PC-9 (cell line): ENCODE measurements at regions of chr2 and their contacts with region 1.

Region 1: DNA sequence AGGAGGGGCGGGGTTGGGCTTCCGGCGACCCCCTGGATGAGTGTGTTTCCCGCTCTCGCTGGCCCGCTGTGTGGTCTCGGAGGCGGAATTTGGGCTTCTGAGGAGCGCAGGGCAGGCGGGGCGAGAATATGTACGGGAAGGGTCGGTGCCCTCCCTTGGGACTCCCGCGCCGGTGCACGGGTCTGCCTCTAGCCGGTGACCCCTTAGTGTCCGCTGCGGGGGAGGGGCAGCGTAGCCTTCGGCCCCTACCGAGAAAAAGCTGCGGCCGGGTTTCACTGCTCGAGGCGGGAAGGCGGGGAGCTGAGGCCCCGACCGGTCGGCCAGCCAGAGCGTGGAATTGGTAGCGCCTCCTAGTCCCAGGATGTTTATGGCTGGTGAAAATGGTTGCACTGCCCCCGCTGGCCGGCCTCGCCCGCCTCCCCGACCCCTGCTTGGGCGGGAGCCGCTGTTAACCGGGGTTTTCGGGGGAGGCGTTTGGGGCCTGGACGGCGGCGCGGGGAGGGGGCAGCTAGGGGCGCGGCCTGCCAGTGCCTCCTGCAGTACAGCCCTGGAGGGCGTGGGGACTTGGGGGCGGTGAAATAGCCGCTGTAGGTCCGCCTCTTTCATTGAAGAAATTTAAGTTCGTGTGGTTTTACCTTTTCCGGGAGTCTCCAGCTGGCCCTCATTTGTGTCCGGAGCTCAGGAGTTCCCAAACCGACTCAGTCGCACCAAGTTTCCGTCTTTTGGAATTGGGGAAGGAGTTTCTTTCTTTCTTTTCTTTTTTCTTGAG is at the start of gene UGP2:
- DNase-seq: peak; percentile 92 to 96
- H3K4me3 ChIP-seq: peak within 1 kb of the TSS; percentile 90
- H3K27ac ChIP-seq: peak within 1 kb of the TSS; percentile 85
- H3K4me1 ChIP-seq: peaks cover 35% of the 10 kb centered on the region
- H3K27me3 ChIP-seq: no peaks in the 10 kb centered on the region
- CTCF ChIP-seq: 0 out of 2 replicates have a peak, but pooled peaks have one; percentile 37
- total RNA-seq, gene UGP2: 83.5 and 89.5 TPM in 2 replicates

Region 2: GRCh38 chr2:63614983-63615945 is 226.2 kb before region 1 on chr2:
- CTCF ChIA-PET with region 1: no interaction called
- POLR2A ChIA-PET with region 1: interaction called, 6 read pairs
- intact Hi-C with region 1: loop called (anchors 2 kb)
- DNase-seq: peak; percentile 57 to 91
- H3K4me3 ChIP-seq: peak overlapping the region; percentile 51
- H3K27ac ChIP-seq: peak overlapping the region; percentile 94
- H3K4me1 ChIP-seq: peaks cover 38% of the 10 kb centered on the region
- H3K27me3 ChIP-seq: no peaks in the 10 kb centered on the region
- CTCF ChIP-seq: no peak

Region 3: DNA sequence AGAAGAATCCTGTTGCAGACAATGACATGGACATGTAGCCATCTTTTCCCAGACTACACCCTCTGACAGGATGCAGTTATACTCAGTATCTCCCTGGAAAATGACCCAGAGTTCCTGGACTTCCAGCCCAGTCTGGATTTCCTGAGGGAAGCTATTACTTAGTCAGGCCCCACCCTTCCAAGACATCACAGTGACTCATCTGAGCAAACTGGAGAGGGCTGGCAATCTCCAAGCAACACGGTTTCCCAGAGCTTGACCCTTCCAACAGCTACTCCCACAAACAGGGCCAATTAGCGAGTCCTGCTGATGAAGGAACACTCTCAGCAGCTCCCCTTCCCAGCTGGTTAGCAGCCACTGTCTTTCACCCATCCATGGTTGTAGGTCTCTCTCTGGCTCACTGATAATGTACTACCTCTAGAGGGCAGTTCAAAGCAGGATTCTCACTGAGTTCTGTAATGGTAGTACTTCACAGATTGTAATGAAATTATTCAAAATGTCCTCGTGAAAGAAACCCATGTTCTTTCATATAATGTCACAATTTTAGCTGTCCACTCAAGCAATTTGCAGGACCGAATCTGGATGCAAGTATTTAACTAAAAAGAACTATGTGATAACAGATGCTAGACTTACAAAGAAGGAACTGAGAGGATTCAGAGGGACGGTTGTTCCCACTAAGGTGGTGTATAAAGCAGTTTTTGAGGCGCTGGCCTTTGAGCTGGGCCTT is 142.5 kb before region 1 on chr2:
- CTCF ChIA-PET with region 1: interaction called, 4 read pairs
- POLR2A ChIA-PET with region 1: no interaction called
- intact Hi-C with region 1: loop called (anchors 2 kb)
- DNase-seq: peak; percentile 52 to 75
- H3K4me3 ChIP-seq: no peak overlapping the region
- H3K27ac ChIP-seq: peak overlapping the region; percentile 54
- H3K4me1 ChIP-seq: peaks cover 25% of the 10 kb centered on the region
- H3K27me3 ChIP-seq: no peaks in the 10 kb centered on the region
- CTCF ChIP-seq: peak; percentile 63

Region 4: DNA sequence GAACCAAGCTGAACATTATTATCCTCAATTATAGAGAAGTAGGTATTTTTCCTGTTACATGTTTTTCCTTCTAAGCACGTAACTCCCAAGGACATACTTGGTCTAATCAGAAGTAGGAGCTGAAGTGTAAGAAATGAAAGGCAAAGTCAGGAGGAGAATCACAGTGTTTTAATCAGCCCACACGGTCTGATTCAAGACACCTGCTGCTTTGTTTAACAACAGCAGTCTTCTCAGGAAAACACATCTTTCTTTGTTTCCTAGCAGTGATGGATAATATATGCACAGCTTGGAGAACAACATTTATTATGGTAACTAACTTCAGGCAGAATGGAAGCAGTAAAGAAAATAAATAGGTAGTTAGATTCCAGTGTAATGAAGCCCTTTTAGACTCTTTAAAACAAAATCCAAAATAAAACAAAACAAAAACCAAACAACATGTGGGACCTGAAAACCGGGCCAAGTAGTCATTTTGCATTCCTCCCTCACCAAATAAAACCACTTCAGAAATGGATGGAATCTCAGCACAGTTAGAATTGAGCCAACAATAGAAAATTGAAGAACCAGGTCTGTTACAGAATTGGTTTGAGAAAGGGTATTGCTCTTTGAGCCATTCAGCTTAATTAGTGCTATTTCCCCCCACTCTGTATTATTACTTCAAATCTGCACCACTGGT is 60.8 kb before region 1 on chr2:
- CTCF ChIA-PET with region 1: no interaction called
- POLR2A ChIA-PET with region 1: interaction called, 18 read pairs
- intact Hi-C with region 1: no loop called
- DNase-seq: no peak
- H3K4me3 ChIP-seq: no peak overlapping the region
- H3K27ac ChIP-seq: no peak overlapping the region
- H3K4me1 ChIP-seq: no peaks in the 10 kb centered on the region
- H3K27me3 ChIP-seq: no peaks in the 10 kb centered on the region
- CTCF ChIP-seq: no peak

Region 5: GRCh38 chr2:64504774-64505720 is 663.6 kb after region 1 on chr2:
- CTCF ChIA-PET with region 1: no interaction called
- POLR2A ChIA-PET with region 1: no interaction called
- intact Hi-C with region 1: no loop called
- DNase-seq: no peak
- H3K4me3 ChIP-seq: no peak overlapping the region
- H3K27ac ChIP-seq: no peak overlapping the region
- H3K4me1 ChIP-seq: no peaks in the 10 kb centered on the region
- H3K27me3 ChIP-seq: no peaks in the 10 kb centered on the region
- CTCF ChIP-seq: no peak